Transverse colon (tissue), 4 donors: ENCODE measurements at regions of chrX and their contacts with region 1.

Region 1: GRCh38 chrX:37883196-37883595 is 35.8 kb upstream of the DYNLT3 start:
- DNase-seq: no peak
- H3K4me3 ChIP-seq: no peak overlapping the region
- H3K27ac ChIP-seq: no peak overlapping the region
- H3K4me1 ChIP-seq: no peaks in the 10 kb centered on the region
- H3K27me3 ChIP-seq: no peaks in the 10 kb centered on the region
- CTCF ChIP-seq: no peak
- EP300 ChIP-seq: no peak
- POLR2A ChIP-seq: no peak

Region 2: DNA sequence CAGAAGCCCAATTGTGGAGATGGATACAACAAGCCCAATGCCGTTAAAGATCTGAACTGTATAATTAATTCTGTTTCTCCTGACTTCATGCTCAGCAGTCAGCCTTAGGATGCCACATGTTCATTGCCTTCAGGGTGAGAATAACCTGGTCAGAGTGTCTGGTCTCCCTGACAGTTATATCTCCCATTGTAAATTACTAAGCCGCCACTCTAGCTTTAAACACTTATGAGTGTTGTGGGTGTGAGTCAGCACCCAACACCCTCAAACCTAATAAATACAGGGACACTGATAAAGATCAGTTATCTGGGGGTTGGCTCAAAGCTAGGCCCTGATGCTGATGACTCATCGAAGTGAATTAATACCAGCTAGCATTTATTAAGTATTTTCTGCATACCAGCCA is 29.1 kb after region 1 on chrX:
- in situ Hi-C with region 1: no loop called
- intact Hi-C with region 1: no loop called
- DNase-seq: no peak
- H3K4me3 ChIP-seq: no peak overlapping the region
- H3K27ac ChIP-seq: no peak overlapping the region
- H3K4me1 ChIP-seq: no peaks in the 10 kb centered on the region
- H3K27me3 ChIP-seq: no peaks in the 10 kb centered on the region
- CTCF ChIP-seq: no peak
- EP300 ChIP-seq: no peak
- POLR2A ChIP-seq: no peak

Region 3: GRCh38 chrX:39361736-39362135 is 1478.5 kb after region 1 on chrX:
- in situ Hi-C with region 1: no loop called
- intact Hi-C with region 1: loop called (anchors 10 kb)
- DNase-seq: no peak
- H3K4me3 ChIP-seq: no peak overlapping the region
- H3K27ac ChIP-seq: no peak overlapping the region
- H3K4me1 ChIP-seq: no peaks in the 10 kb centered on the region
- H3K27me3 ChIP-seq: no peaks in the 10 kb centered on the region
- CTCF ChIP-seq: no peak
- EP300 ChIP-seq: no peak
- POLR2A ChIP-seq: no peak